OCI-LY7 (cell line): ENCODE measurements at regions of chr5 and their contacts with region 1.

Region 1: DNA sequence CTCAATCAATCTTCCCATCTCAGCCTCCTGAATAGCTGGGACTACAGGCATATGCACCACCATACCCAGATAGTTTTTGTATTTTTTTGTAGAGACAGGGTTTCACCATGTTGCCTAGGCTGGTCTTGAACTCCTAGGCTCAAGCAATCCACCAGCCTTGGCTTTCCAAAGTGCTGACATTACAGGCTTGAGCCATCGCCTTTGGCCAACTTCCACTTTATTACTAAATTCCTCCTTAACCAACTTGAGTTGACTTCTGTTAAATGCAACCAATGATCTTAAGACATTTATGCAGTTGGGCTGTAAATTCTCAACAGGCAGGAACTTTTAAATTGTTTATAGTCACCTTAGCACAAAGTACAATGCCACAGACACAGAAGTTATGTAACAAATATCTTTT is 2.8 kb downstream of the LARS1 start:
- DNase-seq: no peak
- H3K4me3 ChIP-seq: peak overlapping the region; percentile 42
- H3K27ac ChIP-seq: no peak overlapping the region
- H3K4me1 ChIP-seq: peaks cover 37% of the 10 kb centered on the region
- CTCF ChIP-seq: no peak

Region 2: GRCh38 chr5:146068206-146068605 is 111.5 kb before region 1 on chr5:
- CTCF ChIA-PET with region 1: no interaction called
- POLR2A ChIA-PET with region 1: no interaction called
- intact Hi-C with region 1: no loop called
- DNase-seq: no peak
- H3K4me3 ChIP-seq: no peak overlapping the region
- H3K27ac ChIP-seq: no peak overlapping the region
- H3K4me1 ChIP-seq: no peaks in the 10 kb centered on the region
- CTCF ChIP-seq: no peak

Region 3: DNA sequence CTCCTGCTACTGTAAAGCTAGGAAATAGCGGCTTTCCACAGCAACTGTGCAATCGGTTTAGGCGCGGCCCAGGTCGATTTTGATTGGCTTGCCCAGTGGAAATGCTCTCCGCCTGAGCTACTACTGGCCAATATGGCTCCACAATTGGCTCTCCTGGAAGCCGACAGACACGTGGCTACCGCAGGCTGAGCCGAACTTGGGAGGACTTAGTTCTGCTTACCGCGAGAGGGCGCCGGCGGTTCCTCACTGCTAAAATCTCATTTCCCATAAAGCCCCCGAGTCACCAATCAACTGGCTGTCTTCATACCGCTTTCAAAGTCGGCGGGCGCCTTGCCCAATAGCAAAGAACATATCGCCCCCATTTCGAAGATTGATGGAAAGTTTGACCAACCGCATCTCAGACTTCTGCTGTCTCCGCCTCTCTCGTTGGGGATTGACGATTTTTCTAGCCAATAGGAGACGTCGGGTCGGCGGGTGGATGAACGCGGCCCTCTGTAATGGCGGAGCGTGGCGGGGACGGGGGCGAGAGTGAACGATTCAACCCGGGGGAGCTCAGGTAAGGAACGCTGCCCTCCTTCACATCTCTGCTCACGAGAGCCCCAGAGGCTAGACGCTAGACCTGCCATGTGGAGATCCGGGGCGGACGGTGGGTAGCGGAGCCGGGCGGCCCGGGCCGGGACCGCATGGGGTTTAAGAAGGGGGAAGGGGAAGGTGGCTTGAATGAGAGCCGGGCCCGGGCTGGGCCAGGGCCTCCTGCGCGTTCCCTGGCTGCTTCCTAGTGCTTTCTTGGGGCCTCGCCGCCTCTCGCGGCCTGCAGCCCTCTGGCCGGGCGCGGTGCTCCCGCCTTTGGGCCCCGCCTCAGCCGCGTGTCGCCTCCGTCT is 267.4 kb after region 1 on chr5 and contains the start of gene TCERG1:
- CTCF ChIA-PET with region 1: no interaction called
- POLR2A ChIA-PET with region 1: interaction called, 3 read pairs
- intact Hi-C with region 1: loop called (anchors 5 kb)
- DNase-seq: peak; percentile 100
- H3K4me3 ChIP-seq: peak within 1 kb of the TSS; percentile 94
- H3K27ac ChIP-seq: peak within 1 kb of the TSS; percentile 76
- H3K4me1 ChIP-seq: peaks cover 26% of the 10 kb centered on the region
- CTCF ChIP-seq: peak; percentile 90
- total RNA-seq, gene TCERG1: 115 and 136 TPM in 2 replicates